Activated naive CD4-positive, alpha-beta T cell treated with anti-CD3 and anti-CD28 coated beads for 36 hours (primary cell): ENCODE measurements at regions of chr22 and their contacts with region 1.

Region 1: DNA sequence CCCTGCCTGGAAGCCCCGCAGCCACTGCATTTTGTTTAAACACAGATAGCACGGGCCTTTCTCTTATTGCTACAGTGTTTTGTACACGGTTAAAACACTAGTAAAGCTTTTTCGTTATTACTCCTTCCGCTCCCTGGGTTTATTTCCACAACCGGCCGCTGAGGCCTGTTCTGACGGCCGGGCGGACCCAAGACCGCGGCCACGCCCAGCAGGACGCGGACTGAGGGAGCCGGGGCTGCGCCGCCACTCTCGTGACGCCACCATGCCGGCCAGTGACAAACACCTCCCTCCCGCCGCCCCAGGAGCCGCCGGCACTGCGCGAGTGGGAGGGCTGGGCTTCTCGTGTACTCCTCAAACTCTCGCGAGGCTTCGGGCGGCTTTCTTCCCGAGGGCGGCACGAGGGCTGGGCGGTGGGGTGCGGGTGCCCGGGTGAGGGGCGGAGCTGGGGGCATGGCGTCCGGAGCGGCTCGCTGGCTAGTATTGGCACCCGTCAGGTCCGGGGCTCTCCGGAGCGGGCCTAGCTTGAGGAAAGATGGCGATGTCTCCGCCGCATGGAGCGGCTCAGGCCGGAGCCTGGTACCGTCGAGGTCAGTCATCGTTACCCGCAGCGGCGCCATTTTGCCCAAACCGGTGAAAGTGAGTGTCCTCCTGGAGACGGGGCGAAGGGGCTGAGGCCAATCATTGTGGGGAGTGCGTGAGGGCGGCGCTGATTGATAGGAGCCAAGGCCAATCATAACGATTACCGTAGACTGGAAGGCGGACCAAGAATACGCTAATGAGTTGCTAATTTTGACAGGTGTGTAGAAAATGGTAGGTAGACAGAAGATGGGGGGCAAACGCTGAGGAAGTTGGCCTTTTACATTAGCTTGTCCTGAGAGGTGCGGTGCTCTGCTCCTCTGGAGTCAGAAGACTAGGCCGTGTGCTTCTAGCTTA is at the start of gene SMDT1:
- DNase-seq: peak; percentile 98
- H3K4me3 Mint-ChIP-seq: peak within 1 kb of the TSS; percentile 95
- H3K27ac Mint-ChIP-seq: peak within 1 kb of the TSS; percentile 96
- H3K4me1 Mint-ChIP-seq: peaks cover 34% of the 10 kb centered on the region
- H3K27me3 Mint-ChIP-seq: no peaks in the 10 kb centered on the region
- total RNA-seq, gene SMDT1: 50.2 to 56.2 TPM

Region 2: GRCh38 chr22:41946629-41947423 is 132.8 kb before region 1 on chr22 and contains the start of gene CENPM:
- CTCF ChIA-PET with region 1: no interaction called
- intact Hi-C with region 1: loop called (anchors 2 kb)
- DNase-seq: peak; percentile 97
- H3K4me3 Mint-ChIP-seq: peak within 1 kb of the TSS; percentile 95
- H3K27ac Mint-ChIP-seq: peak within 1 kb of the TSS; percentile 87
- H3K4me1 Mint-ChIP-seq: peaks cover 58% of the 10 kb centered on the region
- H3K27me3 Mint-ChIP-seq: no peaks in the 10 kb centered on the region
- total RNA-seq, gene CENPM: 95.4 to 110 TPM

Region 3: GRCh38 chr22:42033263-42034181 is 46.1 kb before region 1 on chr22:
- CTCF ChIA-PET with region 1: no interaction called
- intact Hi-C with region 1: no loop called
- DNase-seq: peak; percentile 42
- H3K4me3 Mint-ChIP-seq: no peak overlapping the region
- H3K27ac Mint-ChIP-seq: no peak overlapping the region
- H3K4me1 Mint-ChIP-seq: peaks cover 20% of the 10 kb centered on the region
- H3K27me3 Mint-ChIP-seq: no peaks in the 10 kb centered on the region

Region 4: DNA sequence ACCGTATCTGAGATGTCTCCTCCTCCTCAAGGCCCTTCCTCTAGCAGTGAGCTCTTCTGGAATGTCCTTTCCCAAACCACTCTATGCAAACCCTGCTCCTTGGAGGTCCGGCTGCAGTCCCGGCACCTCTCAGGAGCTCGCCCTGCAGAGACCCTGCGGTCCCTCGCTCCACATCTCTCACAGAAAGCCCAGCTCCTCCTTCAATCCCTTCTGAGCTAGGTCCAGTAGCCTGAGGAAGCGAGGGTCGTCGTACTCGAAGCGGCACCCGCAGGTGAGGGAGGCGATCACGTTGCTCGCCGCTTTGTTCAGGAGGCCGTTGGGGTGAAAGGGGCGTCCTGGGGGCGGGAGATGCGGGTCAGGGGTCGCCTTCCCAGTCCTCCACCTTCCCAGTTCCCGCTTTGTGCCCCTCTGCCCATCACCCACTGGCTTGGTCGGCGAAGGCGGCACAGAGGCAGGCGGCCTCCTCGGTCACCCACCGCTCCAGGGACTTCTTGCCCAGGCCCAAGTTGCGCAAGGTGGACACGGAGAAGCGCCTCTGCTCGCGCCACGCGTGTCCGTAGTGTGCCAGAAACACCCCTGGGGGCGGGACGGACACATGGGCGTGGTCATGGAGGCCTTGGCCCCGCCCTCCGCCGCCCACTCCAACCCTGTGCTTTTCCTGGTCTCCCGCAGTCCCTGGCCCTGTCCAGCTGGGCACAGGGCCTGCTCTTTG is 72.5 kb after region 1 on chr22:
- CTCF ChIA-PET with region 1: no interaction called
- intact Hi-C with region 1: no loop called
- DNase-seq: no peak
- H3K4me3 Mint-ChIP-seq: no peak overlapping the region
- H3K27ac Mint-ChIP-seq: no peak overlapping the region
- H3K4me1 Mint-ChIP-seq: no peaks in the 10 kb centered on the region
- H3K27me3 Mint-ChIP-seq: no peaks in the 10 kb centered on the region